PC-9 (cell line): ENCODE measurements at regions of chr9 and their contacts with region 1.

Region 1: GRCh38 chr9:110744753-110745384 is 76.3 kb downstream of the MUSK start:
- DNase-seq: peak; percentile 72 to 97
- H3K4me3 ChIP-seq: peak overlapping the region; percentile 2; the same call in 1 of the 2 replicates
- H3K27ac ChIP-seq: peak overlapping the region; percentile 87
- H3K4me1 ChIP-seq: peaks cover 48% of the 10 kb centered on the region
- H3K27me3 ChIP-seq: no peaks in the 10 kb centered on the region
- CTCF ChIP-seq: no peak

Region 2: GRCh38 chr9:110638381-110638954 is 106.4 kb before region 1 on chr9:
- CTCF ChIA-PET with region 1: no interaction called
- POLR2A ChIA-PET with region 1: no interaction called
- intact Hi-C with region 1: loop called (anchors 2 kb)
- DNase-seq: peak in 1 of 2 experiments; percentile 52
- H3K4me3 ChIP-seq: no peak overlapping the region
- H3K27ac ChIP-seq: no peak overlapping the region
- H3K4me1 ChIP-seq: peaks cover 7% of the 10 kb centered on the region; the same call in 1 of the 2 replicates
- H3K27me3 ChIP-seq: no peaks in the 10 kb centered on the region
- CTCF ChIP-seq: peak; percentile 72

Region 3: GRCh38 chr9:110767559-110768063 is 22.7 kb after region 1 on chr9:
- CTCF ChIA-PET with region 1: no interaction called
- POLR2A ChIA-PET with region 1: no interaction called
- intact Hi-C with region 1: no loop called
- DNase-seq: no peak
- H3K4me3 ChIP-seq: no peak overlapping the region
- H3K27ac ChIP-seq: no peak overlapping the region
- H3K4me1 ChIP-seq: no peaks in the 10 kb centered on the region; the same call in 1 of the 2 replicates
- H3K27me3 ChIP-seq: no peaks in the 10 kb centered on the region
- CTCF ChIP-seq: no peak

Region 4: DNA sequence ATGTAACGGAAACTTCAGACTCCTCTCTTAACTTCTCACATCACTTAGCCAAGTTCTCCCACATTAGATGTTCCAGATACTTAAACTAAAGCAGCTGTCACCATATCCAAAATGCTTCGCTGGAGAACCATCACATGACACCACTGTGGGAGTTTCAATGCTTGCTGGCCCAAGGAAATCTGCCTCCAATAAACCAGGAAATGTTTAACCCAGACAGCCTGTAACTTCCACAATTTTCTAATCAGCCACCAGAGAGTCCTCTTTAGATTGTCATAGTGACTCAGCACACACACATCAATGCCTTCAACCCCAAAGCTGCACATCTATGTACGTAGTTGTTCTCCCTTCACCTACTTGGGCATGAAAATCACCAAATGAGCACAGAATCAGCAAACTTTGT is 174.7 kb after region 1 on chr9:
- CTCF ChIA-PET with region 1: no interaction called
- POLR2A ChIA-PET with region 1: no interaction called
- intact Hi-C with region 1: loop called (anchors 5 kb)
- DNase-seq: peak; percentile 17 to 77
- H3K4me3 ChIP-seq: no peak overlapping the region
- H3K27ac ChIP-seq: peak overlapping the region; percentile 97
- H3K4me1 ChIP-seq: peaks cover 43% of the 10 kb centered on the region
- H3K27me3 ChIP-seq: no peaks in the 10 kb centered on the region
- CTCF ChIP-seq: no peak

Region 5: GRCh38 chr9:111023128-111023527 is 278.3 kb after region 1 on chr9:
- CTCF ChIA-PET with region 1: no interaction called
- POLR2A ChIA-PET with region 1: interaction called, 32 read pairs
- intact Hi-C with region 1: no loop called
- DNase-seq: no peak
- H3K4me3 ChIP-seq: no peak overlapping the region
- H3K27ac ChIP-seq: no peak overlapping the region
- H3K4me1 ChIP-seq: peaks cover 8% of the 10 kb centered on the region; the same call in 1 of the 2 replicates
- H3K27me3 ChIP-seq: no peaks in the 10 kb centered on the region
- CTCF ChIP-seq: no peak

Region 6: DNA sequence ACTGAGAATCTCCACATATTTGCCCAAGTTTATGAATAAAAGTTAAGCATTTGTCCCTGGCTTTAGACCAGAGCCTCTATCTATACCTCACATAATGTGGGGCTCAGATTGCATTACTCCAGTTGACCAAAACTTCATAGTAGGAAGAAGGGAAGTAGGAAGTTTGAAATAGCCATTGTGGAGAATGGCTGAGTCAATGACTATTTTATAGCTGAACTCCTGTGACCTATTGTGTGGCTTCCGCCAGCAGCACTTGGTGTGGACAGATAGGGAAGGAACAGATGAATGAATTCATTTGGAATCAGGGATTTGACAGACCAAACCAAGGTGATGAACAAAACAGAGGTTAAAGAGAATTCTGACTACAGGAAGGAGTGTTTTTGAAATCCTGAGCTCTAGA is 386.3 kb after region 1 on chr9:
- CTCF ChIA-PET with region 1: no interaction called
- POLR2A ChIA-PET with region 1: interaction called, 10 read pairs
- intact Hi-C with region 1: no loop called
- DNase-seq: no peak
- H3K4me3 ChIP-seq: no peak overlapping the region
- H3K27ac ChIP-seq: no peak overlapping the region
- H3K4me1 ChIP-seq: no peaks in the 10 kb centered on the region
- H3K27me3 ChIP-seq: no peaks in the 10 kb centered on the region
- CTCF ChIP-seq: no peak